ENCODE measurements at regions of chr4 and their contacts with region 1.

Region 1: GRCh38 chr4:42843694-42844093 is 48.8 kb upstream of the GRXCR1 start:
- DNase-seq: no peak
- H3K4me3 ChIP-seq: no peak overlapping the region
- H3K27ac ChIP-seq: no peak overlapping the region
- H3K4me1 ChIP-seq: no peaks in the 10 kb centered on the region
- H3K27me3 ChIP-seq: no peaks in the 10 kb centered on the region
- CTCF ChIP-seq: no peak

Region 2: GRCh38 chr4:42954963-42955669 is 111.4 kb after region 1 on chr4:
- CTCF ChIA-PET with region 1: no interaction called
- POLR2A ChIA-PET with region 1: no interaction called
- intact Hi-C with region 1: no loop called
- DNase-seq: no peak
- H3K4me3 ChIP-seq: no peak overlapping the region
- H3K27ac ChIP-seq: no peak overlapping the region
- H3K4me1 ChIP-seq: no peaks in the 10 kb centered on the region
- H3K27me3 ChIP-seq: no peaks in the 10 kb centered on the region
- CTCF ChIP-seq: no peak

Region 3: DNA sequence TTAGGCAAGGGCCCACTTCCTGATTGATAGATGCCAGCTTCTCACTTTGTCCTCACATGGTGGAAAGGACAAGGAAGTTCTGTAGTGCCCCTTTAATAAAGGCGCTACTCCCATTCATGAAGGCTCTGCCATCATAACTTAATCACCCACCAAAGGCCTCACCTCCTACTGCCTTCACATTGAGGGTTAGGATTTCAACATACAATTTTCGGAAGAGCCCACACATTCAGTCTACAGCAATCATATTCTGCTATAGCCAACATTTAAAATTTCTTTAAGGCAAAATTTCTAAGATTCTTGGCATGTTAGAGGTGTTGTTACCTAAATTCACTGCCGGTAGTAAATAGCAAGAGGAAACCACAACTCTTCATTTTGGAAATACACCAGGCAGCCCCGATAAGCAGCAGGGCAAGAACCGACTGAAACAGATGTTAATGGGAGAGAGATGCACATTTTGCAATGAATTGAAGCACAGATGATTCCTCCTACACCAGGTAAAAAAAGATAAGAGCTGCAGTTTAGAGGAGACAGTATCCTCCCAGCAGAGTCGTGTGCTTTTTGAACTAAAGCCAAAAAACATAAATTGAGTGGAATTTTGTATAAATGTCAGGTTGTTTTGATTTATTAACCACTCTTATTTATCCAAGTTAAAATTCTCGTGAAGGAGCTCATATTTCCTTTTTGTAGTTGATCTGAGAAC is 1010.0 kb after region 1 on chr4:
- CTCF ChIA-PET with region 1: no interaction called
- POLR2A ChIA-PET with region 1: no interaction called
- intact Hi-C with region 1: loop called (anchors 10 kb)
- DNase-seq: no peak
- H3K4me3 ChIP-seq: no peak overlapping the region
- H3K27ac ChIP-seq: no peak overlapping the region
- H3K4me1 ChIP-seq: no peaks in the 10 kb centered on the region
- H3K27me3 ChIP-seq: no peaks in the 10 kb centered on the region
- CTCF ChIP-seq: no peak

Measured in PC-9 (cell line).